Activated CD4-positive, alpha-beta T cell treated with anti-CD3 and anti-CD28 coated beads, Interleukin-2, amount 10 ng/mL, durations not matched to agents 24 days and 14 days (primary cell): ENCODE measurements at regions of chr1 and their contacts with region 1.

Region 1: DNA sequence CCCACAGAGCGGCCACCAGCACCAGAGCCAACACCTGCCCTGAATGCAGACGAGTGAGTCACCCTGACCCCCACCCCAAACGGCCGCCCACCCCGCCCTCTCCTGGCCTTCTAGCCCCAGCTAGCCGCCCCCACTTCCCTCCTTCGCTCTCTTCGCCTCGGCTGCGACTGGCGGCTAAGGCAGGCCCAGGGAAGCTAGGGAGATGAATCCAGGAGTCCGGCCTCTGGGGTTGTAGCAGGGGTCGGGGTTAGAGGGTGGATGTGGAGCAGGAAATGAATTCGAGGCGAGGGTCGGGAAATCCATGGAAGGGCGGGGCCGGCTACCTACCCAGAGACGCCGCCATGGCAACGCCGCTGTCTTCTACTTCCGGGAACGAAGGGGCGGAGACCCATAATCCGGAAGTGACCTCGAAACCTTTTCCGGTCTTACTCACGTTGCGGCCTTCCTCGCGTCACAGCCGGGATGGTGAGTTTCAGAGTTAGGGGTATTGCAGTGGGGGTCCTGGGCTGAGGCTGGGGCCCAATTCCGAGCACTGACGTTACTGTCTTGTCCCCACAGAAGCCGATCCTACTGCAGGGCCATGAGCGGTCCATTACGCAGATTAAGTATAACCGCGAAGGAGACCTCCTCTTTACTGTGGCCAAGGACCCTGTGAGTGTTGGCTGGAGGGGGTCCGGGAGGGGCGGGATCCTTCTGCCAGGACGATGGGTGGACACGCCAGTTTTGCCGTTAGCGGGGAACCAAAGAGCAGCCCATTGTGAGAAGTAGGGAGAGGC is at the starts of genes EIF3I and TMEM234:
- DNase-seq: peak; percentile 98
- H3K4me3 Mint-ChIP-seq: peak within 1 kb of the TSS; percentile 94
- H3K27ac Mint-ChIP-seq: peak within 1 kb of the TSS; percentile 95
- H3K4me1 Mint-ChIP-seq: peaks cover 29% of the 10 kb centered on the region
- H3K27me3 Mint-ChIP-seq: no peaks in the 10 kb centered on the region
- total RNA-seq, gene EIF3I: 304 and 341 TPM in 2 replicates
- total RNA-seq, gene TMEM234: 10.6 and 10.9 TPM in 2 replicates

Region 2: DNA sequence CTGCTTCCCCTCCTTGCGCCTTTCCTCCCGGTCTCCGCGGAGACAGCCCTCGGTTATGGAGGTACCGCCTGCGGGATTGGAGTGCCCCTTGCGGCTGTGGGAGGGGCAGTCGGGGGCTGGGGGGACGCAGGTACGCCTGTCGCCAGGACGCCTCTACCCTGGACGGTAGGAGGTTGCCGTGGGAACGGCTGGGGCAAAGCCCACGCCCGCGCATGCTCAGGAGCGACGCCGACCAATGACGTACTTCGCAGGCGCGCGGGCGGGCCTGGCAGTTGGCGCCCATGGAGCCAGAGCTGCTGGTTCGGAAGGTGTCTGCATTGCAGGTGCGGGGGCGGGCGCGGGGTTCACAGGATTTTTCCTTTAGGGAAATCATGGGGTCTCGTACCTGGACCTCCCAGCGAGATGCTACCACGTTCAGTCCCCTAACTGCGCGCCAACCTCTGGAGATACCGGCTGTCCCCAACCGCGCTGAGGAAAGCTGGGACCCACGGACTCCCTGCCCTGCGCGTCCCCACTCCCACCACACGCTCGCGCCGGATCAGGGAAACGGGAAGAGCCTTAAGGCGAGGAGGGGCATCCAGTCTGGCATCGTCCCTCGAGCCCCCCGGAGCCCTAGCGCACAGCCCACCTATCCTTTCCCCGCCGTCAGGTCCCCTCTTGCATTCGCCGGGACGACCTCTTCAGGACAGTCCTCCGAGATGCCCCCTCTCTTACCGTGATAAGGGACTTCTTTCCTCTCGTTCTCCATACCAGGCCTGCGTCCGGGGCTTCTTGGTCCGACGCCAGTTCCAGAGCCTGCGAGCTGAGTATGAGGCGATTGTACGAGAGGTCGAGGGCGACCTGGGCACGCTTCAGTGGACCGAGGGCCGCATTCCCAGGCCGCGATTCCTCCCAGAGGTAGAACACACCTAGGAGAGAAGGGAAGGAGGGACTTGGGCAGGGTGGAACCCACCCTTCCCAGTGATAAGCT is 16.5 kb before region 1 on chr1 and contains the start of gene IQCC:
- intact Hi-C with region 1: loop called (anchors 1 kb)
- DNase-seq: peak; percentile 96
- H3K4me3 Mint-ChIP-seq: peak within 1 kb of the TSS; percentile 91
- H3K27ac Mint-ChIP-seq: peak within 1 kb of the TSS; percentile 88
- H3K4me1 Mint-ChIP-seq: peaks cover 33% of the 10 kb centered on the region
- H3K27me3 Mint-ChIP-seq: no peaks in the 10 kb centered on the region
- total RNA-seq, gene IQCC: 6.1 and 6.4 TPM in 2 replicates

Region 3: DNA sequence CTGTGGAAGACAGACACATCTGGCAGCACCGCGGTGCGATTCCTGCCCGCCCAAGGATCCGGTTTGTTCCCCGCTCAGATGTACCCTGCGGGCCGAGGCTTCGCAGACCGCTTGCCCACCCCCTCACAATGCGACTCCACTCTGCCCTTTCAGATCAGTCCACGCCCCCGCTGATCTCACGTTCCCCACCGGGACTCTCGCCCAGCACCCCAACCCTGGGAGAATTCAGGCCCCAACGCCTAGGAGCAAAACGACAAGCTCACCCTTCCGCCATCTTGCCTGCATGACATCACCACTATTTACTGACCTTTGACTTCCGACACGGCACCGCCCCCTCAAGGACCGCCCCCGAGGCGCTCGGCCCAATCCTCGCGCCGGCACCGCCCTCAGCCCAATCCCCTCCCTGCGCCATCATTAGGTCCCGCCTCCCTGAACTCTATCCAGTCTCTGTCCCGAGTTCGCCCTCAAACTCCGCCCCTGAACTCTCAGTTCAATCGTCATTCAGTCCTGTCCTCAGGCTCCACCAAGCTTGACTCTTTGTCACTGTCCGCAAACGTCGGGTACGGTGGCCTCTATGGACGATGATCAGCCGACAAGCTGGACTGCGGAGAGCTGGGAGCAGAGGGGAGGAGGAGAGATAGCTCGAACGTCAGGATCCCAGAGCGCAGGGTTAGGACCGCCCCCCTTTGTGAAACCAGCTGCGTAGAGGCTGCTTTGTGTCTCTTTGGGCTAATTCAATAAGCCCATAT is 172.1 kb after region 1 on chr1 and contains the start of gene BSDC1:
- intact Hi-C with region 1: loop called (anchors 1 kb)
- DNase-seq: peak; percentile 100
- H3K4me3 Mint-ChIP-seq: peak within 1 kb of the TSS; percentile 94
- H3K27ac Mint-ChIP-seq: peak within 1 kb of the TSS; percentile 99
- H3K4me1 Mint-ChIP-seq: peaks cover 21% of the 10 kb centered on the region
- H3K27me3 Mint-ChIP-seq: peaks cover 4% of the 10 kb centered on the region
- total RNA-seq, gene BSDC1: 44.8 and 49.5 TPM in 2 replicates

Region 4: GRCh38 chr1:32876341-32877210 is 654.4 kb after region 1 on chr1:
- intact Hi-C with region 1: no loop called
- DNase-seq: peak; percentile 92
- H3K4me3 Mint-ChIP-seq: no peak overlapping the region
- H3K27ac Mint-ChIP-seq: no peak overlapping the region
- H3K4me1 Mint-ChIP-seq: no peaks in the 10 kb centered on the region
- H3K27me3 Mint-ChIP-seq: peaks cover 37% of the 10 kb centered on the region